Esophagus muscularis mucosa (tissue), 4 donors: ENCODE measurements at regions of chr2 and their contacts with region 1.

Region 1: GRCh38 chr2:1742681-1743395 is 1.5 kb downstream of the PXDN start:
- DNase-seq: peak; percentile 95
- H3K4me3 ChIP-seq: peak overlapping the region; percentile 67 to 93 (median 72)
- H3K27ac ChIP-seq: peak overlapping the region; percentile 93 to 100 (median 97)
- H3K4me1 ChIP-seq: peaks cover 30 to 69% (median 63%) of the 10 kb centered on the region in 4 donors
- H3K27me3 ChIP-seq: peaks cover 0 to 8% (median 0%) of the 10 kb centered on the region in 4 donors
- CTCF ChIP-seq: peak; percentile 67 to 78 (median 67)
- EP300 ChIP-seq: no peak
- POLR2A ChIP-seq: peak; percentile 15

Region 2: DNA sequence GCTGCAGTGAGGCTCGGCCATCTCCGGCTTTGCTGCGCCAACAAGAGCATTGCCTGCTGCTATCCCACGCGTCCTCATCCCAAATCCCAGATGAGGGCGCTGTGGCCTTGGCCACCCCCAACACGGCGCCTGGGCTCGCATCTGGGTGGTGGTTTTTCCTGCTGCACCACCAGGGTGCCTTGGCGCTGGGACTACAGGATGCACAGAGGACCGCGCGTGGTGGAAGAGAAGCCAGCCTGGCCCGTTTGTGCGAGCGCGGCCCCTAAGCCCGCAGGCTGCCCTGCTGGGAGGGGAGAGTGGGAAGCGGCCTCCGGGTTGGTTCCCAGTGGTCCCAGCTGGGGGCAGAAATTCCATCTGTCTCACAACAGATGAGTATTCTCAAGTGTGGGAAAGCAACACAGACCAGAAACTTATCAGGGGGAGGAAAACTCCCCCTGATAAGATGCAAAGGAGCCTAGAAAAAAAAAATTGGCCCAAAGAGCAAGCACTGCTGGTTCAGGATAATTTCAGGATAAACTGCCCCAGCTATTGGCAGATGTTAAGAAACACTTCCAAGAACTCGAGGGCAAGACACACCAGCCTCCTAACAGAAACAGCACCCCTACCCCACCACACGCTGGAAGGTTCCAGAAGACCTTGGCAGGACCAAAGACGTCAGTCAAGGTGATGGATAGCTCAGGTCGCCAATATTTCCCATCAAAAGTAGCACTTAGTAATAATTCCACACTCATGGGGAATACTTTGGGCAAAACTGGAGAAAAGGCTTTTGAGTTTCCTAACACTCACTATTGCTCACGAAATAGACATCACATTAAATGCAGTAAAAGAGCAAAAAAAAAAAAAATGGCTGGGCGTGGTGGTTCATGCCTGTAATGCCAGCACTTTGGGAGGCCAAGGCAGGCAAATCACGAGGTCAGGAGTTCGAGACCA is 150.6 kb before region 1 on chr2:
- intact Hi-C with region 1: loop called (anchors 2 kb)
- DNase-seq: no peak
- H3K4me3 ChIP-seq: peak overlapping the region in 2 of 4 donors; percentile 4 to 25
- H3K27ac ChIP-seq: no peak overlapping the region
- H3K4me1 ChIP-seq: peaks cover 27 to 37% (median 31%) of the 10 kb centered on the region in 4 donors
- H3K27me3 ChIP-seq: peaks cover 0 to 19% (median 0%) of the 10 kb centered on the region in 4 donors
- CTCF ChIP-seq: peak; percentile 56 to 72 (median 61)
- EP300 ChIP-seq: no peak
- POLR2A ChIP-seq: no peak

Region 3: DNA sequence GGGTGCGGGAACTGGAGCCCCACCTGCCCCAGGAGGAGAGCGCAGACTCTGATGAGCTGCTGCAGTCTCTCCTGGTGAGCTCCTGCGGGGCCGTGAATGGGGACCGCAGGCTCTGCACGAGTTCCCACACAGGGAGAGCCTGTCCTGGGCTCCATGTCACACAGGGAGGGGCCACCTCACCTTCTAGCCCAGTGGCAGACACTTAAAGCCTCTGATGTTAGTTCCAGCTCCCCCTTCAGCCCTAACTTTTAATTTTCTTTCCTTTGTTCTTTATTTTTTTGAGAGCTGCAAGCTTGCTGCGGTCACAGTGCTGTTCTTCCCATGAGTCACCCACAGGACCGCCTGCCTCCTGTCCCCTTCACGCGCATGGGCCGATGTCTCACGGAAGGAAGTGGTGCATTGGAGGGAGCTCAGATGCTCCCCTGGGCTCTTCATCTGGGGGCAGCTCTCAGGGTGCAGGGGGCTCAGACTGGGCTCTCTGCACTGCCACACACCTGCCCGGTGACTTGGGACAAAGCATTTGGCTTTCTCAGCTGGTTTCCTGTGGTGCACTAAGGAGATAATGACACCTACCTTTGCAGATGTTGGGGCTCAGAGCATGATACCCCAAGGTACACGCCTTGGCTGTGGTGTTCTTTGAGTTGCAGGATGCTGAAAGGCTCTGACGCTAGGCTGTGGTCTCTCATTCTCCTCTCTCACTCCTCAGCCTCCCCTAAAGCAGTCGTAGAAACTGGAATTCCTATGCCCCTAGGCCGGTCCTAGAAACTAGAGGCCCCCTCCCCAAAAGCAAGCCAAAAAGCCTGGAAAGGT is 38.6 kb after region 1 on chr2:
- intact Hi-C with region 1: no loop called
- DNase-seq: no peak
- H3K4me3 ChIP-seq: no peak overlapping the region
- H3K27ac ChIP-seq: no peak overlapping the region
- H3K4me1 ChIP-seq: no peaks in the 10 kb centered on the region
- H3K27me3 ChIP-seq: peaks cover 0 to 6% (median 0%) of the 10 kb centered on the region in 4 donors
- CTCF ChIP-seq: no peak
- EP300 ChIP-seq: no peak
- POLR2A ChIP-seq: no peak